ENCODE measurements at regions of chr10 and their contacts with region 1.

Region 1: DNA sequence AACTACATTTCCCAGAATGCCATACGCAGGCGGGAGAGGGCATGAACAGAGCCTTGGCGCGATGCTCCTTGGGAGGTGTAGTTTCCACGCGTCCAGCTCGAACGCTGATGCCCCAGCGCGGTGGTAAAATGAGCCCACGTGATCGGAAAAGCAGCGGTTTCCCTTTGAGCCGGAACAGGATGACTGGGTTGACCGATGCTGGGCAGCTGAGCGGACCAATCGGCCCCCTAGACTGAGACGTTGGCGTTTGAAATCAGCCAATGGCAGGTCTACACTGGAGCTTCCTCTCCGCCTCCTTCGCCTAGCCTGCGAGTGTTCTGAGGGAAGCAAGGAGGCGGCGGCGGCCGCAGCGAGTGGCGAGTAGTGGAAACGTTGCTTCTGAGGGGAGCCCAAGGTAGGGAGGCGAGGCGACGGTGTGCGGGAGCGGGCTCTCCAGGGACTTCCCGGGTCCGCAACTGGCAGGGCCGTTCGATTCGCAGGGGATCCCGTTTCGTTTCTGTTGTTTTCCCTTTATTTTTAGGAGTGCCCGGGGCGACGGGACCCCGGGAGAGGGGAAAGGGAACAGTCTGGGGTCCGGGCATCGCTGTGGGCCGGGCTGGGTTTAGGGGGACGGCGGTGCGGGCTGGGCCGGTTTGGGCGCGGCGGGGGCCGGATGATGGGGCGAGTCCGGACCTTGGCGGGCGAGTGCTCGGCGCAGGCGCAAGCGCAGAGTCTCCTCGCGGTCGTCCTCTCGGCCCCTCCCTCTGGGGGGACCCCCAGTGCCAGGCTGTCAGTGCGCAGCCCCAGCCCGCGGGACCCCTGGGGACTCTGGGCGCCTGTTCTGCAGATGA is at the start of gene BUB3:
- DNase-seq: peak; percentile 85 to 99 (median 94)
- ATAC-seq: peak; percentile 87
- H3K4me3 ChIP-seq: peak within 1 kb of the TSS; percentile 81 to 98
- H3K4me3 Mint-ChIP-seq: peak within 1 kb of the TSS; percentile 100
- H3K27ac ChIP-seq: peak within 1 kb of the TSS; percentile 74 to 91
- H3K27ac Mint-ChIP-seq: peak within 1 kb of the TSS; percentile 99
- H3K4me1 ChIP-seq: peaks cover 71% of the 10 kb centered on the region
- H3K4me1 Mint-ChIP-seq: peaks cover 73% of the 10 kb centered on the region
- H3K27me3 ChIP-seq: peaks cover 7 to 22% of the 10 kb centered on the region in 2 experiments
- H3K27me3 Mint-ChIP-seq: peaks cover 11% of the 10 kb centered on the region
- CTCF ChIP-seq: no peak
- total RNA-seq, gene BUB3: 166 to 167 TPM

Region 2: GRCh38 chr10:121927841-121928527 is 1226.3 kb before region 1 on chr10 and contains the start of gene ATE1:
- CTCF ChIA-PET with region 1: no interaction called
- POLR2A ChIA-PET with region 1: no interaction called
- intact Hi-C with region 1: loop called in 1 of 2 experiments (anchors 10 kb)
- DNase-seq: peak; percentile 68 to 91 (median 81)
- ATAC-seq: peak; percentile 90
- H3K4me3 ChIP-seq: peak within 1 kb of the TSS; percentile 72 to 87
- H3K4me3 Mint-ChIP-seq: peak within 1 kb of the TSS; percentile 91
- H3K27ac ChIP-seq: peak within 1 kb of the TSS; percentile 91 to 94
- H3K27ac Mint-ChIP-seq: peak within 1 kb of the TSS; percentile 97
- H3K4me1 ChIP-seq: peaks cover 14% of the 10 kb centered on the region
- H3K4me1 Mint-ChIP-seq: peaks cover 30% of the 10 kb centered on the region
- H3K27me3 ChIP-seq: no peaks in the 10 kb centered on the region
- H3K27me3 Mint-ChIP-seq: no peaks in the 10 kb centered on the region
- CTCF ChIP-seq: no peak
- total RNA-seq, gene ATE1: 11.6 to 14.6 TPM

Region 3: DNA sequence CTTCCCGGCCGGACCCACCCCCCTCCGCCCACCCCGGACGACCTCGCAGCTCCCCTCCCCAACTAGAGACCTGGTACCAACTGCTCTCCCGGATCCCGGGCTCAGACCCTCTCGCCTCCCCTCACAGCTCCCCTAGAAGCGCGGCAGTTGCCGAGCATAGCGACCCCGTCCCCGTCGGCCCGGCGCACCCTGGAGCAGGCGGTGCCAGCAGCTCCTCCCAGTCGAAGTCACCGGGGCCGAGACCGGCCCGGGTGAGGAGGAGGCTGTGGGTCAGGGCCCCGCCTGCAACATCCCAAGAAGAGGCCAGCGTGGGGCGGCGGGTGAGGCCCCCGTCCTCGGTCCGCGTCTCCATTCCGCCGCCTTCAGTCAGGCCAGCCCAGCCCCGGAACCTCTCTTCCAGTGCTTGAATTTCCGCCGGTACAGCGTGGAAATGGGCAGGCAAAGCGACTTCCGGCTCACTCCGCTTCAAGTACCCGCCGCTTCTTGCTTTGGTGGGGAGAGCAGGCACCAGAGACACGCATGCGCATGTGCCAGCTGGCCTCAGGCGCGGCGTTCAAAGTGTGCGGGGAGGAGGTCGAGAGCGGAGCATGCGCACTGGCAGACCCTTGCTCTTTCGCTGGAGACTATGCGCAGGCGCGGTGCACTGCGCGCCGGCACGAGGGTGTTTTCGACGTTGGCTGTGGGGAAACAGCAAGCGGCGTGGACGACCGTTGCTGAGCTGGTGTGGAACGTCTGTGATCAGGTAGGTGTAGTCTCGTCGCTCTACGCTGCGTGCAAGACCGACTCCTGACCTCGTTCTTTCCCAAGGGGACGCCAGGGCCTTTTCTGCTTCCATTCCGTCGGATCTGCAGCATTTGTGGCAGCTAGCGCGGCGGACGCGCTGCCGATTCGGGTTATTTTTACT is 200.2 kb before region 1 on chr10 and contains the start of gene C10orf88:
- CTCF ChIA-PET with region 1: no interaction called
- POLR2A ChIA-PET with region 1: no interaction called
- intact Hi-C with region 1: loop called (anchors 1 kb)
- DNase-seq: peak; percentile 95 to 100 (median 97)
- ATAC-seq: peak; percentile 91
- H3K4me3 ChIP-seq: peak within 1 kb of the TSS; percentile 67 to 82
- H3K4me3 Mint-ChIP-seq: peak within 1 kb of the TSS; percentile 86
- H3K27ac ChIP-seq: peak within 1 kb of the TSS; percentile 36 to 72
- H3K27ac Mint-ChIP-seq: peak within 1 kb of the TSS; percentile 86
- H3K4me1 ChIP-seq: peaks cover 21% of the 10 kb centered on the region
- H3K4me1 Mint-ChIP-seq: peaks cover 46% of the 10 kb centered on the region
- H3K27me3 ChIP-seq: no peaks in the 10 kb centered on the region
- H3K27me3 Mint-ChIP-seq: no peaks in the 10 kb centered on the region
- CTCF ChIP-seq: no peak
- total RNA-seq, gene C10orf88: 2.2 to 2.8 TPM

Region 4: GRCh38 chr10:123132576-123133477 is 21.5 kb before region 1 on chr10:
- CTCF ChIA-PET with region 1: interaction called, 9 read pairs
- POLR2A ChIA-PET with region 1: no interaction called
- intact Hi-C with region 1: loop called in 1 of 2 experiments (anchors 2 kb)
- DNase-seq: peak; percentile 73 to 91 (median 87)
- ATAC-seq: peak; percentile 62
- H3K4me3 ChIP-seq: peak overlapping the region in 1 of 2 experiments; percentile 16
- H3K4me3 Mint-ChIP-seq: peak overlapping the region; percentile 69
- H3K27ac ChIP-seq: no peak overlapping the region
- H3K27ac Mint-ChIP-seq: no peak overlapping the region
- H3K4me1 ChIP-seq: peaks cover 44% of the 10 kb centered on the region
- H3K4me1 Mint-ChIP-seq: peaks cover 33% of the 10 kb centered on the region
- H3K27me3 ChIP-seq: peaks cover 40 to 44% of the 10 kb centered on the region in 2 experiments
- H3K27me3 Mint-ChIP-seq: peaks cover 62% of the 10 kb centered on the region
- CTCF ChIP-seq: peak; percentile 95

Region 5: GRCh38 chr10:124020876-124021815 is 866.8 kb after region 1 on chr10:
- CTCF ChIA-PET with region 1: no interaction called
- POLR2A ChIA-PET with region 1: no interaction called
- intact Hi-C with region 1: no loop called
- DNase-seq: no peak
- ATAC-seq: no peak
- H3K4me3 ChIP-seq: no peak overlapping the region
- H3K4me3 Mint-ChIP-seq: no peak overlapping the region
- H3K27ac ChIP-seq: no peak overlapping the region
- H3K27ac Mint-ChIP-seq: no peak overlapping the region
- H3K4me1 ChIP-seq: no peaks in the 10 kb centered on the region
- H3K4me1 Mint-ChIP-seq: peaks cover 4% of the 10 kb centered on the region
- H3K27me3 ChIP-seq: no peaks in the 10 kb centered on the region
- H3K27me3 Mint-ChIP-seq: peaks cover 3% of the 10 kb centered on the region
- CTCF ChIP-seq: no peak

Region 6: DNA sequence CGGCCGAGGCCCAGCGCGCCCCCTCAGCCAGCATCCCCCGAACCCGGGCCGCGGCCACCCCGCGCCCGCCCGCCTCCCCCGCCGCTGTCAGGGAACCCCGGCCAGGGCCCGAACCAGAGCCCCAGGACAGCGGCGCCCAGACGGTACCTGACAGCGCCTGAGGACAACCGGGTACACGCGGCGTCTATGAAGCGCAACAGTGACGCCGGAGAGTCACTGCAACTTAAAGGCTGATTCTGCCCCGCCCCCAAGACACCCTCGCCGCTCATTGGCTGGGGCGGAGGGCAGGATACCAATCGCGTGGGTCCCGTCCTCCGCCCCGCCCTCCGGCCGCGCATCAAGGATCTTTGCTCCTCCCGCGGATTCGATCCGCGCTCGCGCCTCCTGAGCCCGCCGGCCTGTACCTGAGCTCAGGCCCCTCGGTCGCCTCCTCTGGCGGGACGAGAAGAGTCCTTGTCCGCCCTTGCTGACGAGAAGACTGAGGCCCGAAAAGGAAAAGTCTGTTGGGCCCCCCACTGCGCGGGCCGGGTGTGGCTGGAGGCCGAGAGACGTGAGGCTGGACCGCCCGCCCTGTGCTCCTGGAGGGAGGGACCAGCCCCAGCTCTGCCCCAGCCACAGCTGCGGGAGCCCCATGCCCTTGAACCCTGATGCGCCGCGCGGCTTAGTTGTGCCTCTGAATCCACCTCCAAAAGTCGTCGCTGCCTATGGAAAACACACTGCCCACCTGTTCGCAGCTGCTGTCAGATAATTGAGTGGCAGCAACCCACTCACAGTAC is 1264.6 kb after region 1 on chr10 and contains the start of gene OAT:
- CTCF ChIA-PET with region 1: no interaction called
- POLR2A ChIA-PET with region 1: no interaction called
- intact Hi-C with region 1: loop called in 1 of 2 experiments (anchors 10 kb)
- DNase-seq: peak; percentile 93 to 98 (median 97)
- ATAC-seq: peak; percentile 98
- H3K4me3 ChIP-seq: peak within 1 kb of the TSS; percentile 66 to 68
- H3K4me3 Mint-ChIP-seq: peak within 1 kb of the TSS; percentile 85
- H3K27ac ChIP-seq: peak within 1 kb of the TSS; percentile 70
- H3K27ac Mint-ChIP-seq: peak within 1 kb of the TSS; percentile 83
- H3K4me1 ChIP-seq: peaks cover 14% of the 10 kb centered on the region
- H3K4me1 Mint-ChIP-seq: peaks cover 25% of the 10 kb centered on the region
- H3K27me3 ChIP-seq: no peaks in the 10 kb centered on the region
- H3K27me3 Mint-ChIP-seq: peaks cover 7% of the 10 kb centered on the region
- CTCF ChIP-seq: no peak
- total RNA-seq, gene OAT: 49.8 to 56.1 TPM

Region 7: DNA sequence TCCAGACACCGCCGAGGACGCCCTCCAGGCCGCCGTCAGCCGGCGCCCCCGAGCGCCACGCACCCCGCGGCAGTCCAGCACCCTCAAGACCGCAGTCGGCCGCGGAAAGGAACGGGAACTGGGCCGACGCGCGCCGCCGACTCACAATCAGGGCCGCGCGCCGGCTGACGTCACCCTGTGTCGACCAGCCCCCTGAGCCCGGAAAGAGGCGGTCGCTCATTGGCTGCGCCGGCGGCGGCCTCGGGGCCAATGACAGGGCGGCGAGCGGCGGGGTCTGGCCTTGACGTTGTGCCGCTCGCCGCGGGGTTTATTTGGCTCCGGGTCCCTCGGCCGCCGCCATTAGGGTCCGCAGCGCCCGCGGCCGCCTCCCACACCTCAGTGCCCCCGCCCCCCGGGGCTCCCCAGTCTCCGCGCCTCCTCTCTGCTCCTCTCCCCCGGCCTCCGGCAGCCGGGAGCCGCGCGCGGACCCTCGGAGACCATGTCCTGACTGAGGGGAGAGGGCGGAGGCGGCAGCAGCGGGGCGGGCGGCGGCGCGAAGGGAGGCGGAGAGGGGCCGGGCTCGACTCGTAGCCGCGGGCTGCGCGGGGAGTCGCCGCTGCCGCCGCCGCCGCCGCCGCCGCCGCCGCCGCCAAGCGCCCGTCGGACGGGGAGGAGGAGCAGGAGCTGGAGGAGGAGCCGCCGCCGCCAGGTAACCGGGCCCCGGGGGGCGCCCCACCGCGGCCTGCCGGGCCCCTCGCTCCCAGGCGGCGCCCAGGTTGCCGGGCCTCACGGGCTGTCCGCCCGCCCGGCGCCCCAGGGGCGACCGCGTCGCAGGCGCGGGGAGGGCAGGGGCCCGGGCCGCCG is 1762.5 kb after region 1 on chr10:
- CTCF ChIA-PET with region 1: no interaction called
- POLR2A ChIA-PET with region 1: no interaction called
- intact Hi-C with region 1: loop called in 1 of 2 experiments (anchors 10 kb)
- DNase-seq: peak; percentile 92 to 98 (median 97)
- ATAC-seq: peak; percentile 87
- H3K4me3 ChIP-seq: peak overlapping the region; percentile 82 to 92
- H3K4me3 Mint-ChIP-seq: peak overlapping the region; percentile 88
- H3K27ac ChIP-seq: peak overlapping the region; percentile 95 to 99
- H3K27ac Mint-ChIP-seq: peak overlapping the region; percentile 96
- H3K4me1 ChIP-seq: peaks cover 26% of the 10 kb centered on the region
- H3K4me1 Mint-ChIP-seq: peaks cover 40% of the 10 kb centered on the region
- H3K27me3 ChIP-seq: no peaks in the 10 kb centered on the region
- H3K27me3 Mint-ChIP-seq: peaks cover 2% of the 10 kb centered on the region
- CTCF ChIP-seq: no peak

Measured in CD8-positive, alpha-beta T cell (primary cell).